ENCODE measurements at regions of chr6 and their contacts with region 1.

Region 1: GRCh38 chr6:159929819-159930218 is 39.0 kb downstream of the MAS1 start:
- H3K4me3 Mint-ChIP-seq: no peak overlapping the region
- H3K27ac Mint-ChIP-seq: no peak overlapping the region
- H3K4me1 Mint-ChIP-seq: peaks cover 12% of the 10 kb centered on the region
- H3K27me3 Mint-ChIP-seq: peaks cover 16% of the 10 kb centered on the region

Region 2: DNA sequence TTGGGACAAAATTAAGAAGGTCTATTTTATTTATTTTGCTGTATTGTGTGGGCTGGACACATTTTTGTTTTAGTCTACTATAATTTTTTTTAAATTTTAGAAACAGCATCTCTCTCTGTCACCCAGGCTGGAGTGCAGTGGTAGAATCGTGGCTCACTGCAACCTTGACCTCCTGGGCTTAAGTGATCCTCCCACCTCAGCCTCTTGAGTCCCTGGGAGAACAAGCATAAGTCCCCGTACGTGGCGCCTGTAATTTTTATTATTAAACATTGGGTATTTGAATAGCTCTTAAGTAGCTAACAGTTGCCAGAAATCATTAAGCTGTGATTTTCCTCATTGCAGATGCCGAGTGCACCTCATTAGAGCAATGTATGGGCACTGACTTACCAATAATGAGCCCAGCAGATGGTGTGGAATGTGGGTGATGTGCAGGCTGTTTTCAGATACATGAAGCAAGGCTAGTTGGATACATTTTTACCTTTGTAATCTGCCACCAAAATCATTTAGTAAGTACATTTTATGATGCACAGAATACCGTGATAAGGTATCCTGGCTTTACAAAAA is 49.3 kb before region 1 on chr6:
- intact Hi-C with region 1: loop called (anchors 5 kb)
- H3K4me3 Mint-ChIP-seq: no peak overlapping the region
- H3K27ac Mint-ChIP-seq: no peak overlapping the region
- H3K4me1 Mint-ChIP-seq: peaks cover 6% of the 10 kb centered on the region
- H3K27me3 Mint-ChIP-seq: peaks cover 22% of the 10 kb centered on the region

Region 3: DNA sequence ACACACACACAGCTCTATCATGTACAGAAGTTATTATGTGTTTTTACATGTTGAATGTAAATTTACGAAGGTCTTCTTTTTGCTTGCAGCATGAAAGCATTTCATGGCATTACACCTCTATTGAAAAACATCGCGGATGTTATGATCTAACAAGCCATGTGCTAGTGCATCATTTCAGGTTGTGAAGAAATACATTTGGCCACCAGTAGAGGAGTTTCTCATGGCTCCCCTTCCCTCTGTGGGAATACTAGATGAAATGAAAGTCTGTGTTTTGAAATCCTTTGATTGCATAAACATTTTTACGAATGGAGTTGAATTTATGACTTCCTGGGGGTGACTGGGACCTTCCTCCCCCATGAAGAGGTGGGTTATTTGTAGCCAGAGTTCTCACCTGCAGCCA is 21.3 kb before region 1 on chr6:
- intact Hi-C with region 1: no loop called
- H3K4me3 Mint-ChIP-seq: no peak overlapping the region
- H3K27ac Mint-ChIP-seq: no peak overlapping the region
- H3K4me1 Mint-ChIP-seq: no peaks in the 10 kb centered on the region
- H3K27me3 Mint-ChIP-seq: peaks cover 39% of the 10 kb centered on the region